ENCODE measurements at regions of chr1 and their contacts with region 1.

Region 1: DNA sequence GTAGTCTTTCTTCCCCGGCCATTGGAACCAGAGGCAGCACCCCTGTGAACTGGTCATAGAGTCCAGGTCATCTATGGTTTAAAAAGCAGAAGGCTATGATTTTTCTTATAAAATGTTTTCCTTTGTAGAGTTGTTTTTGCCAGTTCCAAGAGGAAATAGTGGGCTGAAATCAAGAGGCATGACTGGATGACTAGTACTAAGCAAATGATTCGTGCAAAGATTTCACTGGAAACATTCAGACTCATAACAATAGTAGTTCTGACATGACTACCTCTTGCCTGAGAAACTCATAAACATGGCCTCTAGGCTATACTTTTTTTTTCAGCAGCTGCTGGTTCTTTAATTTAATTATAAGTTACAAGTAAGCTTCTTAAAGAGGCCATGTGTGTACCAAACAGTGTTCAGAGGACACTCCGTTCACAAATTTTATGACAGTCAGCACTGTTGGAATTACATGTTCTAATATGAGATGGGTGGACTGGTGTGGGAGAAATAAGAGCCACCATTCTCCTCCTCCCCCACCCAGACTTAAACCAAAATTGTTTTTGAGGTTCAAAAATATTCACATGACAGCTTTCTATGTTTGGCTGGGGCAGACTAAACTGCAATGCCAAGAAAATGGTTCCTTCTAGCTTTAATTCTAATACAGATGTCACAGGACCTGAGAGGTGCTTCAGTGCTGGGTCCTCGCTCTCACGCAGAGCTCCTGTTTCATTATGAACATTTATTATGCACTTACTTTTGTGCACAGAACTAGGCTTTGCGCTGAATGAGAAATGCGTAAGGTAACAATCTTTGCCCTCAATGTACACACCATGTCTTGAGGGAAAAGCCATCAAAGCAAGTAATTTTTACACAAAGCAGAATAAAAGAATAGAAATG is 147.5 kb downstream of the ZC3H11B start:
- DNase-seq: peak; percentile 16
- H3K4me3 Mint-ChIP-seq: no peak overlapping the region
- H3K27ac Mint-ChIP-seq: peak overlapping the region; percentile 66
- H3K4me1 Mint-ChIP-seq: peaks cover 11% of the 10 kb centered on the region
- H3K27me3 Mint-ChIP-seq: peaks cover 2% of the 10 kb centered on the region

Region 2: GRCh38 chr1:219189021-219189824 is 276.2 kb before region 1 on chr1:
- CTCF ChIA-PET with region 1: no interaction called
- POLR2A ChIA-PET with region 1: no interaction called
- intact Hi-C with region 1: loop called (anchors 5 kb)
- DNase-seq: no peak
- H3K4me3 Mint-ChIP-seq: no peak overlapping the region
- H3K27ac Mint-ChIP-seq: no peak overlapping the region
- H3K4me1 Mint-ChIP-seq: peaks cover 32% of the 10 kb centered on the region
- H3K27me3 Mint-ChIP-seq: no peaks in the 10 kb centered on the region

Region 3: GRCh38 chr1:219317762-219318353 is 147.6 kb before region 1 on chr1:
- CTCF ChIA-PET with region 1: no interaction called
- POLR2A ChIA-PET with region 1: no interaction called
- intact Hi-C with region 1: no loop called
- DNase-seq: no peak
- H3K4me3 Mint-ChIP-seq: no peak overlapping the region
- H3K27ac Mint-ChIP-seq: no peak overlapping the region
- H3K4me1 Mint-ChIP-seq: no peaks in the 10 kb centered on the region
- H3K27me3 Mint-ChIP-seq: peaks cover 3% of the 10 kb centered on the region

Region 4: DNA sequence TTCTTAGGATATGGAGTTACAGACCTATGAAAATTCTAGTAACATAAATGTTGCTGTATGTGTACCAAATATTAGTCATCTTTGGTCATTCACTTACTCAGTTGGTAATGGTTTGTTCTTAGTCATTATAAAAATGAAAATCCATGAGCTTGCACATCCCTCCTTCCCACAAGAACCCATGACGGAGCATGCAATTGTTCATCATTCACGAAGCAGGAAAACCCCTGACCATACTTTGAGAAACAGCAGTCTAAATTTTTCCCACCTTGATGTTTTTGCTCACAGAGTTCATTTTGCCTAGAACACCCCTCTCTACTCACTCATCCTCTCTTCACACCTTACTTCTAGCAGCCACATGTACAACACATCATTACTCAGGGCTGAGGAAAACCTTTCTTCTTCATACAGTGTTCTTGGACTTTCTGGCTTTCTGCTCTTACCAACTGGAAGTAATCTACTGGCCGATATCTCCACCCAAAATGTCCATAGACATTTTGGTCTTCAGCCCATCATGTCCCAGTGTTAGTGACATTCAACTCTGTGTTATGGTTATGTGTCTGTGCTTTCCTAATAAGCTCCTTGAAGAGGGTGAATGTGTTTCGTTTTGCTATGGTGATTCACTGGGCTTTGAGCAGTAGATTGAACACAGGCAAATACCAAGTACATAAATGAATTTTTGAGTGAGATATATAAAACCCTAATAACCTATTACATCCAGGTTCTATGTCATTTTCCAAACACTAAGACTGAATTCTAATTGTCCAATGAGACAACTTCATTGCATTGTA is 42.4 kb before region 1 on chr1:
- CTCF ChIA-PET with region 1: interaction called, 3 read pairs
- POLR2A ChIA-PET with region 1: no interaction called
- intact Hi-C with region 1: loop called (anchors 1 kb)
- DNase-seq: peak; percentile 33
- H3K4me3 Mint-ChIP-seq: no peak overlapping the region
- H3K27ac Mint-ChIP-seq: peak overlapping the region; percentile 67
- H3K4me1 Mint-ChIP-seq: peaks cover 7% of the 10 kb centered on the region
- H3K27me3 Mint-ChIP-seq: peaks cover 1% of the 10 kb centered on the region

Region 5: GRCh38 chr1:219498666-219499065 is 33.2 kb after region 1 on chr1:
- CTCF ChIA-PET with region 1: no interaction called
- POLR2A ChIA-PET with region 1: no interaction called
- intact Hi-C with region 1: no loop called
- DNase-seq: no peak
- H3K4me3 Mint-ChIP-seq: no peak overlapping the region
- H3K27ac Mint-ChIP-seq: no peak overlapping the region
- H3K4me1 Mint-ChIP-seq: no peaks in the 10 kb centered on the region
- H3K27me3 Mint-ChIP-seq: no peaks in the 10 kb centered on the region

Region 6: GRCh38 chr1:219773775-219774174 is 308.3 kb after region 1 on chr1:
- CTCF ChIA-PET with region 1: no interaction called
- POLR2A ChIA-PET with region 1: no interaction called
- intact Hi-C with region 1: no loop called
- DNase-seq: no peak
- H3K4me3 Mint-ChIP-seq: no peak overlapping the region
- H3K27ac Mint-ChIP-seq: no peak overlapping the region
- H3K4me1 Mint-ChIP-seq: no peaks in the 10 kb centered on the region
- H3K27me3 Mint-ChIP-seq: no peaks in the 10 kb centered on the region